GM12878 (cell line): ENCODE measurements at regions of chr10 and their contacts with region 1.

Region 1: GRCh38 chr10:101840741-101841453 is 2.7 kb downstream of the KCNIP2 start:
- DNase-seq: no peak
- ATAC-seq: peak; percentile 90
- H3K4me3 ChIP-seq: peak overlapping the region; percentile 81
- H3K27ac ChIP-seq: no peak overlapping the region
- H3K4me1 ChIP-seq: peaks cover 23% of the 10 kb centered on the region
- H3K27me3 ChIP-seq: no peaks in the 10 kb centered on the region
- CTCF ChIP-seq: peak; percentile 98 to 99 (median 98); a peak in 5 of 6 replicates
- EP300 ChIP-seq: no peak
- POLR2A ChIP-seq: no peak
- RAD21 ChIP-seq: peak; percentile 98

Region 2: DNA sequence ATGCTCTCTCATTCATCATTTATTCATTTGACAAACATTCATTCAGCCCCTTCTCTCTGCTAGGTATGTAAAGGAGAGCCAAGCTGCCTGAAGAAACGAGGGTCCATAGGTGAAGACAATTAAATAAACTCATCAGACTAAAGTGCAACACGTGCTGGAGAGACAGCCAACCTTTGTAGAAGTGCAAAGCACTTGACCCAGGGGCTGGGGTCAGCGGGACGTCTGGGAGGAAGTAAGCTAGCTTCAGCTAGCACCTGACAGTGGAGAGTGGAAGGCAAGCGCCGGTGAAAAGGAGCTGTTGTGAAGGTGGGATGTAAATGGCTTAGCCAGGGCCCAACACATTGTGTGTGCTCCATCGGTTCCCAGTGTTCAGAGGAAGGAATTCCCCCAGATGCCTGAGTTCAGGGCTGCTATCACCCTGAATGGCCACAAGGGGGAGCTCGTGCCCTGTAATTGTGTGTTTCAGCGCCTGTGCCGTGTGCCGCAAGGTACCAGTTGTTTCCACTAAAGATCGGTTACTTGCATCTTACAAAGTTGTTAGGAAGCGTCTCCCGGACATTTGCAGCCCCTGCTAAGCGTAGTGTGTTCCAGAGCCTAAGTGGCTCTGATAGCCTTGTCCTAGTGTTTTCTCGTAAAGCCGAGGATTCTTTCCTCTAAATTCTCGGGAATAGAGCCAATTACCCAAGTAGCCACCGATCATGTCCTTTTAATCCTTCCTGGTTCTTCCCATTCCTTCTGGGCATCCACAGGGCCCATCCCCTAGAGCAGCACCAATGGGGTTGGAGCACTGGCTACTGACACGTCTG is 679.2 kb before region 1 on chr10:
- CTCF ChIA-PET with region 1: no interaction called
- POLR2A ChIA-PET with region 1: no interaction called
- RAD21 ChIA-PET with region 1: no interaction called
- SMC1A ChIA-PET with region 1: no interaction called
- in situ Hi-C with region 1: no loop called
- intact Hi-C with region 1: no loop called
- DNase-seq: peak; percentile 12
- ATAC-seq: peak; percentile 96
- H3K4me3 ChIP-seq: no peak overlapping the region
- H3K27ac ChIP-seq: no peak overlapping the region
- H3K4me1 ChIP-seq: peaks cover 6% of the 10 kb centered on the region
- H3K27me3 ChIP-seq: peaks cover 1 to 2% of the 10 kb centered on the region in 2 experiments; a peak in 3 of 4 replicates
- CTCF ChIP-seq: peak; percentile 94 to 97 (median 95); a peak in 5 of 6 replicates
- EP300 ChIP-seq: no peak
- POLR2A ChIP-seq: no peak
- RAD21 ChIP-seq: peak; percentile 70

Region 3: DNA sequence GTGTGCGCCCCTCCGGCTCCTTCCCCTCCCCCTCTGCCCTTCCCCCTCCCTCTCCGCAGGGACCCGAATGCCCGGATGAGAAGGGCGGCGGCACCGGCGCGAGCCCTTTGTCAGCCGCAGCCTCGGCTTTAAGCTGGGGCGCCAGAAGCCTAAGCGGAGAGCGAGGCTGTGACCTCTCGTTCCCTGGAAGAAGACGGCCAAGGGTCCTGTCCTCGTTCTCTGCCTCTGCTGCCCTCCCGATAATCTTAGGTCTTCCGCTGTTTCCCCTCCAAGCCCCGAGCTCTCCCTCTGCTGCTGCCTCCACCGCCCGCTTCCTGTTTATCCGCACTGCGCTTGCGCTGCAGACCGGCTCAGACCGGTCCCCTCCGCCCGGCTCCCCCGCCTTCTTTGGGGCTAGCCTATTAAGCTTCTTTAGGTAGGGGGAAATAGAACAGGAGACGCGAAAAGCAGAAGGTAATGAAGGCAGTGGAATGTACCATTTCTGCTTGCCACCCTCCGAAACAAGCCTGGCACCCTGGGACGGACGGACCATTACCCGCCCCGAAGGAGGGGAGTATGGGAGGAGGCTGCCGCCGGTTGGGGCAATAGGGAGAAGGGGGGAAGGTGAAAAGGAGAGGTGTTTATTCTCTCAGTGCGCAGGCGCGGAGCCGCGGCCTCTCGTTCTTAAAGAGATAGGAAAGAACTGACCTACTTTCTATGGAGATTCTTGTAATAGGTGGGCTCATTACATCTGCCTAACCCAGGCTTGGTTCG is 22.6 kb before region 1 on chr10 and contains the start of gene OGA:
- CTCF ChIA-PET with region 1: interaction called, 20 read pairs
- POLR2A ChIA-PET with region 1: interaction called, 9 read pairs
- RAD21 ChIA-PET with region 1: interaction called, 19 read pairs
- SMC1A ChIA-PET with region 1: interaction called, 11 read pairs
- in situ Hi-C with region 1: no loop called
- intact Hi-C with region 1: no loop called
- DNase-seq: peak; percentile 100
- ATAC-seq: peak; percentile 91
- H3K4me3 ChIP-seq: peak within 1 kb of the TSS; percentile 81
- H3K27ac ChIP-seq: peak within 1 kb of the TSS; percentile 95
- H3K4me1 ChIP-seq: peaks cover 11% of the 10 kb centered on the region; the same call in 1 of the 2 replicates
- H3K27me3 ChIP-seq: no peaks in the 10 kb centered on the region
- CTCF ChIP-seq: no peak
- EP300 ChIP-seq: peak; percentile 58 to 73; a peak in 2 of 4 replicates
- POLR2A ChIP-seq: peak; percentile 92
- RAD21 ChIP-seq: no peak
- polyA plus RNA-seq, gene OGA: 23.0 to 28.3 TPM

Region 4: GRCh38 chr10:101889256-101890210 is 48.6 kb after region 1 on chr10:
- CTCF ChIA-PET with region 1: interaction called, 398 read pairs
- POLR2A ChIA-PET with region 1: interaction called, 34 read pairs
- RAD21 ChIA-PET with region 1: interaction called, 206 read pairs
- SMC1A ChIA-PET with region 1: interaction called, 120 read pairs
- in situ Hi-C with region 1: no loop called
- intact Hi-C with region 1: loop called (anchors 1 kb)
- DNase-seq: peak; percentile 66
- ATAC-seq: peak; percentile 93
- H3K4me3 ChIP-seq: 0 out of 2 replicates have a peak overlapping the region, but pooled peaks have one; percentile 29
- H3K27ac ChIP-seq: peak overlapping the region; percentile 67
- H3K4me1 ChIP-seq: peaks cover 22% of the 10 kb centered on the region
- H3K27me3 ChIP-seq: no peaks in the 10 kb centered on the region
- CTCF ChIP-seq: peak; percentile 86 to 93 (median 91)
- EP300 ChIP-seq: no peak
- POLR2A ChIP-seq: no peak
- RAD21 ChIP-seq: peak; percentile 98

Region 5: DNA sequence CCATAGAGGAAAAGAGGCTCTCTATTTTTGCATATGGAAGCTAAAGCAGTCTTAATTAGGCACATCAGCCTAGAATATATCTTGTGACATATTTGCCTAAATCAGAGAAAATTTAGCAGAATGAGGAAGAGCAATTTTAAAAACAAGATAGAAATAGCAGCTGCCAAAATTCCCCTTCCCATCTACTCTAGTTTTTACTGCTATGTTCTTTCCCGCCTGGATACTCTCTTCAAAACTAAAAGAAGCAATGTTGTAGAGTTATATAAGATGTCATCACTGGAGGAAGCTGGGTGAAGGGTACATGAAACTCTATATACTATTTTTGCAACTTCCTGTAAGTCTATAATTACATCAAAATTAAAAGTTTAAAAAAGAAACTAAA is 128.0 kb after region 1 on chr10:
- CTCF ChIA-PET with region 1: interaction called, 10 read pairs
- POLR2A ChIA-PET with region 1: no interaction called
- RAD21 ChIA-PET with region 1: interaction called, 12 read pairs
- SMC1A ChIA-PET with region 1: interaction called, 16 read pairs
- in situ Hi-C with region 1: no loop called
- intact Hi-C with region 1: no loop called
- DNase-seq: peak; percentile 76
- ATAC-seq: peak; percentile 72
- H3K4me3 ChIP-seq: no peak overlapping the region
- H3K27ac ChIP-seq: peak overlapping the region; percentile 99
- H3K4me1 ChIP-seq: peaks cover 80% of the 10 kb centered on the region
- H3K27me3 ChIP-seq: no peaks in the 10 kb centered on the region
- CTCF ChIP-seq: no peak
- EP300 ChIP-seq: peak in 1 of 2 experiments; percentile 74
- POLR2A ChIP-seq: no peak
- RAD21 ChIP-seq: no peak

Region 6: DNA sequence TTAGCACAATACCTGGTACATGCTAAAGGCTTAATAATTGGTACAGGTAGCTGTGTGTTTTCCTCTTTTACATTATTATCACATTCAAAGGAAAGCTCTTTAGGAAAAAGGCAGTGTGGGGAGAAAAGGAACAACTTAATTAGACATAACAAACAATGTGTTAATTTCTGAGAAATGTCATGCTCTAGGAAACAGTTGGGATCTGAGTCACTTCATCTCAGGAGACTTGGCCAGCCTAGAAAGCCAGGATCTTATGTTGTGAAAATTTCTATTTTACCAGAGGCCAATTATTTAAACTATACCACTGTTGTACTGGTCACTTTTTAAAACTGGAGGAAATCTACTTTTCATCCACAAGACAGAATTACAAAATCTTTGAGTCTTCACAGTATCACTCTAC is 175.5 kb after region 1 on chr10:
- CTCF ChIA-PET with region 1: interaction called, 697 read pairs
- POLR2A ChIA-PET with region 1: no interaction called
- RAD21 ChIA-PET with region 1: interaction called, 538 read pairs
- SMC1A ChIA-PET with region 1: interaction called, 407 read pairs
- in situ Hi-C with region 1: no loop called
- intact Hi-C with region 1: no loop called
- DNase-seq: no peak
- ATAC-seq: no peak
- H3K4me3 ChIP-seq: no peak overlapping the region
- H3K27ac ChIP-seq: no peak overlapping the region
- H3K4me1 ChIP-seq: no peaks in the 10 kb centered on the region
- H3K27me3 ChIP-seq: no peaks in the 10 kb centered on the region
- CTCF ChIP-seq: no peak
- EP300 ChIP-seq: no peak
- POLR2A ChIP-seq: no peak
- RAD21 ChIP-seq: no peak

Region 7: GRCh38 chr10:102085336-102085735 is 244.4 kb after region 1 on chr10:
- CTCF ChIA-PET with region 1: interaction called, 16 read pairs
- POLR2A ChIA-PET with region 1: no interaction called
- RAD21 ChIA-PET with region 1: no interaction called
- SMC1A ChIA-PET with region 1: interaction called, 5 read pairs
- in situ Hi-C with region 1: no loop called
- intact Hi-C with region 1: no loop called
- DNase-seq: no peak
- ATAC-seq: no peak
- H3K4me3 ChIP-seq: no peak overlapping the region
- H3K27ac ChIP-seq: no peak overlapping the region
- H3K4me1 ChIP-seq: no peaks in the 10 kb centered on the region
- H3K27me3 ChIP-seq: no peaks in the 10 kb centered on the region
- CTCF ChIP-seq: no peak
- EP300 ChIP-seq: no peak
- POLR2A ChIP-seq: no peak
- RAD21 ChIP-seq: no peak